Aorta (tissue), 5 donors: ENCODE measurements at regions of chr3 and their contacts with region 1.

Region 1: DNA sequence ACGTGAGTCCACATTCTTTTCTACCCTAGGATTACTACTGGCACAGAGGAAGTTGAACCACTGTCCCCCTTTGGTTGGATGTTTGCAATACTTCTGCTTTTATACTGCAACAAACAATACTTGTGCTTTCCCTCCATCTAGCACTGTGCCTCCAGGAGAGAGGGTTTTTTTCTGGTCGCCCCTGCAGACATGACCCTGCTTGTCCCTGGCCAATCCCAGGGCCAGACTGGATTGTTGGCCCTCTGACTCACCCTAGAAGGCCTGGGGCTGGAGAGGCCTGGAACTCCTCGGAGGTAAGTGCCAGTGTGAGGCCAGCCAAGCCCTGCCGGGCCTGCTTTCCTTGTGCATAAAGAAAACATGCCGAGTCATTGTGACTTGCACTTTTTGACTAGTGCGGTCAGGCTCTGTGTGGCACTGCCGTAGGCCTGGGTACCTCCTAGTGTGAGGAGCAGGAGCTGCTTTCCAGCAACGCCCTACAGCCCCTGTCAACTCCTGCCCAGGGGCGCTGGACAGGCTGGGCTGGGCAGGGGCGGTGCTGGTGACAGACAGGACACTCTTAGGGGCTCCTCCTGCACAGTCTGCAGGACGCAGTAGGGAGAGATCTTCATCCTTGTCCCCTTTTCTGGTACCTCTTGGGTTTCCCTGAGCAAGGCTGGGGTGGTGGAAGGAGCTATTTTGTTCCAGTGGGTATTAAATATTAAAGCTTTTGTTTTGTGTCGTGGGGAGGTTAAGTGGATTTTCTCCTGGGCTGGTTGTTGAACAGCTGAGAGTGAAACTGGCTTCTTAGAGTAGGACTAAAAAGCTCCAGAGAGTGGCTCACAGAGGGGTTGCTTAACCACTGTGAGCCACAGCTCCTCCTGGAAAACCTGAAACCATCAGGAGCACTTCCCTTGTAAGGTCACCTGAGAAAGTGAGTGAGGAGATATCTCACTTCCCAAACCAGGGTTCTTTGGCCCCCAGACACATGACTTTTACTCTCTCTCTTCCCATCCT is 14.4 kb upstream of the TKT start:
- DNase-seq: peak; percentile 93 to 95
- ATAC-seq: peak; percentile 96
- H3K4me3 ChIP-seq: no peak overlapping the region
- H3K27ac ChIP-seq: peak overlapping the region; percentile 89 to 94
- H3K4me1 ChIP-seq: no peaks in the 10 kb centered on the region
- H3K27me3 ChIP-seq: no peaks in the 10 kb centered on the region

Region 2: GRCh38 chr3:53236112-53236841 is 33.9 kb before region 1 on chr3:
- intact Hi-C with region 1: loop called in 1 of 2 experiments (anchors 5 kb)
- DNase-seq: peak; percentile 87 to 91
- ATAC-seq: peak; percentile 92
- H3K4me3 ChIP-seq: no peak overlapping the region
- H3K27ac ChIP-seq: peak overlapping the region in 1 of 2 donors; percentile 60
- H3K4me1 ChIP-seq: no peaks in the 10 kb centered on the region
- H3K27me3 ChIP-seq: no peaks in the 10 kb centered on the region